CD8-positive, alpha-beta T cell (primary cell): ENCODE measurements at regions of chr19 and their contacts with region 1.

Region 1: GRCh38 chr19:48492925-48493717 is 18.5 kb downstream of the LMTK3 start:
- DNase-seq: peak; percentile 68 to 89 (median 80)
- ATAC-seq: peak; percentile 79
- H3K4me3 ChIP-seq: peak overlapping the region; percentile 41 to 58
- H3K4me3 Mint-ChIP-seq: peak overlapping the region; percentile 71
- H3K27ac ChIP-seq: no peak overlapping the region
- H3K27ac Mint-ChIP-seq: no peak overlapping the region
- H3K4me1 ChIP-seq: peaks cover 38% of the 10 kb centered on the region
- H3K4me1 Mint-ChIP-seq: peaks cover 38% of the 10 kb centered on the region
- H3K27me3 ChIP-seq: peaks cover 0 to 19% of the 10 kb centered on the region in 2 experiments
- H3K27me3 Mint-ChIP-seq: peaks cover 3% of the 10 kb centered on the region
- CTCF ChIP-seq: no peak

Region 2: DNA sequence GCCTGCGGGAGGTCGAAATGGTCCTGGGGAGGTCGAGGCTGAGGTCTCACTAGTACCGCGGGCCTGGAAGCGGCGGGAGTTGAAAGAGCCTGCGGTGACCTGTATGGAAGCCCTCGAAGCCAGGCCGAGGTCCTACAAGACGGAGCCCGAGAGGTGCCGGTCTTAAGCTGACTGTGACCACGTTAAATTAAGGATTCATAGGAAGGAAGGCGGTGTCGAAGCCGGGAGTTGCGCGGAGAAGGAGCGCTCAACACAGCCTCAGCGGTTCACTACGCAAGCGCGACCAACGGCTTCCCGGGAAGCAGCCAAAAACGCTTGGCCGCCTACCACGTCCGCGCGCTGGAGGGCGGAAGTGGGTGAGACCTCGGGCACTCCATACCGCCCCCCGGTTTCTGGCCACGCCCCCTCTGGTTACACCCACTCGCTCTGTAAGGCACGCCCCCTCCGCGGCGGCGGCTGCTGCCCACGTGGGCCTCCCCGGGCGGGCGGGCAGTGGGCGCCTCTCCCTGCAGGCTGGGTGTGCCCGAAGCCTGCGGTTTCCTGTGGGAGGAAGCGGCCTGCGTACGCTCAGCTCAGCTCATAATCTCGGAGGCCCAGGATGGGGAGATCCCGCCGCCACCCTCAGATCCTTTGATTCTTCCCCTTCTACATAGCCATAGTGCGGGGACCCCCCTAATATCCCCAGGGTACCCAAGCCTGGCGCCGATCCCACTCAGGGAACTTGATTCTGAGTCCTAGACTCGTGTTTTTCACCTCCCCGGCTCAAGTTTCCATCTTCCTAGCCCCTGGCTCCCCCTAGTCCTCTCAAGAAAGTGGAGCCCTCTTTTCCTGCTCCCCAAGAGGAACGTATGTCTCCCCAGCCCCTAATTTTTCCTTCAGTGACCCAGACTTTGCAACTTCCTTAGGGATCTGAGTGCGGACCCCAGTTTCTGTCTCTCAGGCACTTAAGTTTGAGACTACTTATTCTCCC is 171.2 kb before region 1 on chr19:
- CTCF ChIA-PET with region 1: interaction called, 3 read pairs
- POLR2A ChIA-PET with region 1: no interaction called
- intact Hi-C with region 1: loop called in 1 of 2 experiments (anchors 1 kb)
- DNase-seq: peak; percentile 99 to 100 (median 100)
- ATAC-seq: peak; percentile 68
- H3K4me3 ChIP-seq: peak overlapping the region; percentile 76 to 78
- H3K4me3 Mint-ChIP-seq: peak overlapping the region; percentile 94
- H3K27ac ChIP-seq: peak overlapping the region; percentile 87 to 99
- H3K27ac Mint-ChIP-seq: peak overlapping the region; percentile 100
- H3K4me1 ChIP-seq: peaks cover 54% of the 10 kb centered on the region
- H3K4me1 Mint-ChIP-seq: peaks cover 60% of the 10 kb centered on the region
- H3K27me3 ChIP-seq: no peaks in the 10 kb centered on the region
- H3K27me3 Mint-ChIP-seq: no peaks in the 10 kb centered on the region
- CTCF ChIP-seq: no peak

Region 3: DNA sequence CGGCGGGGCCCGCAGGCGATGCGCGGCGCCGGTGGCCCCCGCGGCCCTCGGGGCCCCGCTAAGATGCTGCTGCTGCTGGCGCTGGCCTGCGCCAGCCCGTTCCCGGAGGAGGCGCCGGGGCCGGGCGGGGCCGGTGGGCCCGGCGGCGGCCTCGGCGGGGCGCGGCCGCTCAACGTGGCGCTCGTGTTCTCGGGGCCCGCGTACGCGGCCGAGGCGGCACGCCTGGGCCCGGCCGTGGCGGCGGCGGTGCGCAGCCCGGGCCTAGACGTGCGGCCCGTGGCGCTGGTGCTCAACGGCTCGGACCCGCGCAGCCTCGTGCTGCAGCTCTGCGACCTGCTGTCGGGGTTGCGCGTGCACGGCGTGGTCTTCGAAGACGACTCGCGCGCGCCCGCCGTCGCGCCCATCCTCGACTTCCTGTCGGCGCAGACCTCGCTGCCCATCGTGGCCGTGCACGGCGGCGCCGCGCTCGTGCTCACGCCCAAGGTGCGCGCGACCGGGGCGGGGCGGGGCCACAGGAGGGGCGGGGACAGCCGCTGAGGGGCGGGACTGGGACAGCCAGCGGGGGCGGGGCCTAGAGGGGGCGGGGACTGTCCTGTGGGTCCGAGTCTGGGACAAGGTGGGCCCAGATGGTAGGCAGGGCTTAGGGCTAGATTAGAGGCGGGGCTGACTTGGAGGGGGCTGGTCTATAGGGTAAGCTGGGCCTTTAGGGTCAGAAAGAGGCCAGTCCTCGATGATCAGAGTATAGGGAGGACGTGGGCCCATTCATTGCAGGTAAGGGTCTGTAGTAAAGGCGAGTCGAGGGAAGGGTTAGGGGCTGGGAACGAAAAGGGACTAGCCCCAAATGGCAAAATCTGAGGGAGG is 94.5 kb before region 1 on chr19:
- CTCF ChIA-PET with region 1: no interaction called
- POLR2A ChIA-PET with region 1: no interaction called
- intact Hi-C with region 1: loop called (anchors 5 to 10 kb)
- DNase-seq: peak; percentile 73 to 94 (median 86)
- ATAC-seq: peak; percentile 77
- H3K4me3 ChIP-seq: peak overlapping the region; percentile 45 to 47
- H3K4me3 Mint-ChIP-seq: peak overlapping the region; percentile 63
- H3K27ac ChIP-seq: peak overlapping the region in 1 of 2 experiments; percentile 35
- H3K27ac Mint-ChIP-seq: no peak overlapping the region
- H3K4me1 ChIP-seq: peaks cover 42% of the 10 kb centered on the region
- H3K4me1 Mint-ChIP-seq: peaks cover 36% of the 10 kb centered on the region
- H3K27me3 ChIP-seq: peaks cover 20 to 32% of the 10 kb centered on the region in 2 experiments
- H3K27me3 Mint-ChIP-seq: peaks cover 22% of the 10 kb centered on the region
- CTCF ChIP-seq: no peak

Region 4: GRCh38 chr19:48468775-48469288 is 24.3 kb before region 1 on chr19:
- CTCF ChIA-PET with region 1: interaction called, 16 read pairs
- POLR2A ChIA-PET with region 1: no interaction called
- intact Hi-C with region 1: loop called (anchors 1 kb)
- DNase-seq: peak; percentile 98 to 100 (median 99)
- ATAC-seq: peak; percentile 85
- H3K4me3 ChIP-seq: peak overlapping the region; percentile 83 to 95
- H3K4me3 Mint-ChIP-seq: peak overlapping the region; percentile 90
- H3K27ac ChIP-seq: peak overlapping the region; percentile 75 to 90
- H3K27ac Mint-ChIP-seq: peak overlapping the region; percentile 85
- H3K4me1 ChIP-seq: peaks cover 15% of the 10 kb centered on the region
- H3K4me1 Mint-ChIP-seq: peaks cover 21% of the 10 kb centered on the region
- H3K27me3 ChIP-seq: no peaks in the 10 kb centered on the region
- H3K27me3 Mint-ChIP-seq: no peaks in the 10 kb centered on the region
- CTCF ChIP-seq: no peak

Region 5: DNA sequence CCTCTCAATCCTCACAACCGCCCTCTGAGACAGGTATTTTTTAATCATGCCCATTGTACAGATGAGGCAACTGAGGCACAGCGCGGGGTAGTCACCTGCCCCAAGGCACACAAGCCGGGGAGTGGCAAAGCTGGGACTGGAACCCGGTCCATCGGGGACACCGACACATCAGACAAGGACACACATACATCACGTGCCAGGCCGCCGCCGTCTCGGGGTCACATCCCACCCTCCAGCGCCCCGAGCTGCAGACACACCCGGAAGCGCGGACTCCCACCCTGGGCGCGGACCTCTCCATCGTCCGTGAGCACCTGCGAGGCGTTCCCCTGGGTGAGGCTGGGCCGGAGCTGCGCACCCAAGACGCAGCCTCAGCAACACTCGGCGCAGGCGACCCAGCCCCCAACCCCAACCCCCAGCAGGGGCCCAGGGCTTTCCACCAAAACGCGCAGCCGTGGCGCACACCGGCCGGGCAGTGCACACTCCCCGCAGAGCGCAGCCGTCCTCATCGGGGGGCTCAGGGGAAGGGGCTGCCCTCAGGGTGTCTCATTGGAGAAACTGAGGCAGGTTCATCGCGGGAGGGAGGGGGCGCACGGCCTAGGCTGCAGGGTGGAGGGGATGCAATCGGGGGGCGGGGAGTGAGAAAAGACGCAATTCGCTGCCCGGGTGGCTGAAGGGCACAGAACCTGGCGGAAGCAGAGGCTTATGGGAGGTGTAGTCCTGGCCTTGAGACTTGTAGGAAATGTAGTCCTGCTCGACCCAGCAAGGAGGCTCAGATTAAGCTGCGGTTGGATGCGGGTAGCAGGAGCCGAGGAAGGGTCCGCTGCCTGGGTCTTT is 20.4 kb after region 1 on chr19:
- CTCF ChIA-PET with region 1: interaction called, 16 read pairs
- POLR2A ChIA-PET with region 1: interaction called, 7 read pairs
- intact Hi-C with region 1: loop called (anchors 1 to 2 kb)
- DNase-seq: peak in 8 of 9 experiments; percentile 61 to 88 (median 78)
- ATAC-seq: peak; percentile 58
- H3K4me3 ChIP-seq: peak overlapping the region; percentile 78 to 88
- H3K4me3 Mint-ChIP-seq: no peak overlapping the region
- H3K27ac ChIP-seq: peak overlapping the region; percentile 68 to 71
- H3K27ac Mint-ChIP-seq: peak overlapping the region; percentile 93
- H3K4me1 ChIP-seq: peaks cover 23% of the 10 kb centered on the region
- H3K4me1 Mint-ChIP-seq: peaks cover 18% of the 10 kb centered on the region
- H3K27me3 ChIP-seq: no peaks in the 10 kb centered on the region
- H3K27me3 Mint-ChIP-seq: no peaks in the 10 kb centered on the region
- CTCF ChIP-seq: no peak

Region 6: DNA sequence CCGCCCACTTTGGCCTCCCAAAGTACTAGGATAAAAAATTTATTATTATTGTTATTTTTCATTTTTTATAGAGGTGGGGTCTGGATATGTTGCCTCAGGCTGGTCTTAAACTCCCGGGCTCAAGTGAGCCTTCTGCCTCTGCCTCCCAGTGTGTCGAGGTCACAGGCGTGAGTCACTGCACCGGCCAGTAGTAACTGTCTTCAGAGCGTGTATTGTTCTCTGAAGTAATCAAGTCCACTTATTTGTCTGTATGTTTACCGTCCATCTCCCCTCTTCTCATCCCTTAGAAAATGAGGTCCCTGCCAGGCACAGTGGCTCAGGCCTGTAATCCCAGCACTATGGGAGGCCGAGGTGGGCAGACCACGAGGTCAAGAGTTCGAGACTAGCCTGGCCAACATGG is 40.6 kb after region 1 on chr19:
- CTCF ChIA-PET with region 1: no interaction called
- POLR2A ChIA-PET with region 1: no interaction called
- intact Hi-C with region 1: no loop called
- DNase-seq: no peak
- ATAC-seq: no peak
- H3K4me3 ChIP-seq: no peak overlapping the region
- H3K4me3 Mint-ChIP-seq: no peak overlapping the region
- H3K27ac ChIP-seq: no peak overlapping the region
- H3K27ac Mint-ChIP-seq: no peak overlapping the region
- H3K4me1 ChIP-seq: no peaks in the 10 kb centered on the region
- H3K4me1 Mint-ChIP-seq: no peaks in the 10 kb centered on the region
- H3K27me3 ChIP-seq: peaks cover 0 to 2% of the 10 kb centered on the region in 2 experiments
- H3K27me3 Mint-ChIP-seq: peaks cover 5% of the 10 kb centered on the region
- CTCF ChIP-seq: no peak

Region 7: DNA sequence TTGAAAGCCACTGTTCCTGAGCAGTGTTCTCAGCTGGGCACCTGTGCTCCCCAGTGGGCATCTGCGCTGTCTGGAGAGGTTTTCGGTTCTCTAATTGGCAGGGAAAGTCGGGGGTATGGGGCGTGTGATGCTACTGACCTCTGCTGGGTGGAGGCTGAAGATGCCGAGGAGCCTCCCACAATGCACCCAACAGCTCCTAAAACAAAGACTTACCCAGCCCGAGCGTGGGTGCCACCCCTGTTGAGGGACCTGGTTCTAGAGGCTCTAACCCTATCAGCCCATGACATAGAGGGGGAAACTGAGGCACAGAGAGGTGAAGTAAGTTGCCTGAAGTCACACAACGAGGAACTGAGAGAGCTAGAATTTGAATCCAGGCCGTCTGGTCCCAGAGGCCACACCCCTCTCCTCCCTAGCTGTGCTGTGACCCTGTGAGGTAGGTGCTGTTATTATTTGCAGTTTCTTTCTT is 115.7 kb after region 1 on chr19:
- CTCF ChIA-PET with region 1: interaction called, 29 read pairs
- POLR2A ChIA-PET with region 1: no interaction called
- intact Hi-C with region 1: loop called in 1 of 2 experiments (anchors 1 kb)
- DNase-seq: peak in 8 of 9 experiments; percentile 28 to 76 (median 54)
- ATAC-seq: peak; percentile 91
- H3K4me3 ChIP-seq: no peak overlapping the region
- H3K4me3 Mint-ChIP-seq: no peak overlapping the region
- H3K27ac ChIP-seq: no peak overlapping the region
- H3K27ac Mint-ChIP-seq: no peak overlapping the region
- H3K4me1 ChIP-seq: peaks cover 6% of the 10 kb centered on the region
- H3K4me1 Mint-ChIP-seq: peaks cover 4% of the 10 kb centered on the region
- H3K27me3 ChIP-seq: no peaks in the 10 kb centered on the region
- H3K27me3 Mint-ChIP-seq: no peaks in the 10 kb centered on the region
- CTCF ChIP-seq: peak; percentile 50

Region 8: DNA sequence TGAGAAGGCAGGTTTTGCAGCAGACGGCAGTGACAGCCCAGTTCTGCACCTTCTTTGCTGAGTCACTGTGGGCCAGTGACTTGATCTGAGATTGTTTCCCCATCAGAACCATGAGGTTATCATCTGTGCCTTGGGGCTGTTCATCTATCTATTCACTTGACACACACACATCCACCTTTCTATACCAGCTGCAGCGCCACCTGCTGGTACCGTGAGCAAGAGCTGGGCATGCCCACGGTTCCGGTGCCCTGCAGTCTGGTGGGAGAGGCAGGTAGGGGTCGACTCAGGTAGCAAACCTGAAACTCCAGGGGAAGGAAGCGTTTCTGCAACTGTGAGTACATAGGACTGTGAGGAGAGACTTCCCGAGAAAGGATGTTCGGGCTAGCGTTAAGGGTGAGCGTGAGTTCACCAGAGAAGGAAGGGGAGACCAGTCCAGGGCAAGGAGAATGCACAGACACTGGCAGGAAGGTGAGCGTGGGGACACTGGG is 613.6 kb after region 1 on chr19:
- CTCF ChIA-PET with region 1: no interaction called
- POLR2A ChIA-PET with region 1: no interaction called
- intact Hi-C with region 1: no loop called
- DNase-seq: peak; percentile 42 to 78 (median 70)
- ATAC-seq: peak; percentile 83
- H3K4me3 ChIP-seq: no peak overlapping the region
- H3K4me3 Mint-ChIP-seq: no peak overlapping the region
- H3K27ac ChIP-seq: no peak overlapping the region
- H3K27ac Mint-ChIP-seq: no peak overlapping the region
- H3K4me1 ChIP-seq: no peaks in the 10 kb centered on the region
- H3K4me1 Mint-ChIP-seq: peaks cover 5% of the 10 kb centered on the region
- H3K27me3 ChIP-seq: no peaks in the 10 kb centered on the region
- H3K27me3 Mint-ChIP-seq: no peaks in the 10 kb centered on the region
- CTCF ChIP-seq: peak; percentile 80